Mucosa of descending colon (tissue), 3 donors: ENCODE measurements at regions of chrX and their contacts with region 1.

Region 1: GRCh38 chrX:15468036-15468435 is 25.1 kb downstream of the PIR start:
- DNase-seq: peak in 1 of 3 donors; percentile 38
- ATAC-seq: peak; percentile 47
- H3K4me3 ChIP-seq: no peak overlapping the region
- H3K4me1 ChIP-seq: no peaks in the 10 kb centered on the region
- CTCF ChIP-seq: no peak

Region 2: GRCh38 chrX:15349046-15349445 is 119.0 kb before region 1 on chrX:
- intact Hi-C with region 1: loop called (anchors 5 kb)
- DNase-seq: peak in 1 of 3 donors; percentile 64
- ATAC-seq: peak; percentile 68
- H3K4me3 ChIP-seq: no peak overlapping the region
- H3K4me1 ChIP-seq: no peaks in the 10 kb centered on the region
- CTCF ChIP-seq: no peak

Region 3: DNA sequence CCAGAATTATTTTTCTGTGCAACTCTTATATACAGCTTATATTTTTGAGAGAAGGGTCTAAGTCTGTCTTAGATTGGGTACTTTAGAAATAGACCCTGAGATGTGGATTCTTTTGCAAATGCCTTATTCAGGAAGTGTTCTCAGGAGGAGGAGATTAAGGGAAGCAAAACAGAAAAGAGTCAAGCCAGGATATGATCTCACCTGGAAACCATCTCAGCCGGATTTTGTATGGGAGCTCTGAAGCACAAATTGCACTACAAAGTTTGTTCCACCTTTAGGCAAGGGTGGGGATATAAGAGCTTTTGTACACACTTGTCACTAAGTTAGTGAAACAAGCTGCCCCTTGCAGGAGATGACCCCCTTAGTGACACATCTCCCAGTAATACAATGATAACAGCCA is 534.1 kb after region 1 on chrX:
- intact Hi-C with region 1: no loop called
- DNase-seq: no peak
- ATAC-seq: no peak
- H3K4me3 ChIP-seq: no peak overlapping the region
- H3K4me1 ChIP-seq: no peaks in the 10 kb centered on the region
- CTCF ChIP-seq: no peak